ENCODE measurements at regions of chr6 and their contacts with region 1.

Region 1: GRCh38 chr6:111259089-111259831 is 172.0 kb downstream of the SLC16A10 start:
- DNase-seq: peak; percentile 97 to 100 (median 99)
- ATAC-seq: peak; percentile 92 to 93
- H3K4me3 Mint-ChIP-seq: peak overlapping the region; percentile 62 to 94 (median 86)
- H3K27ac Mint-ChIP-seq: peak overlapping the region; percentile 79 to 98 (median 95)
- H3K4me1 Mint-ChIP-seq: peaks cover 13 to 34% (median 32%) of the 10 kb centered on the region in 4 donors
- H3K27me3 Mint-ChIP-seq: peaks cover 0 to 2% (median 0%) of the 10 kb centered on the region in 5 donors

Region 2: DNA sequence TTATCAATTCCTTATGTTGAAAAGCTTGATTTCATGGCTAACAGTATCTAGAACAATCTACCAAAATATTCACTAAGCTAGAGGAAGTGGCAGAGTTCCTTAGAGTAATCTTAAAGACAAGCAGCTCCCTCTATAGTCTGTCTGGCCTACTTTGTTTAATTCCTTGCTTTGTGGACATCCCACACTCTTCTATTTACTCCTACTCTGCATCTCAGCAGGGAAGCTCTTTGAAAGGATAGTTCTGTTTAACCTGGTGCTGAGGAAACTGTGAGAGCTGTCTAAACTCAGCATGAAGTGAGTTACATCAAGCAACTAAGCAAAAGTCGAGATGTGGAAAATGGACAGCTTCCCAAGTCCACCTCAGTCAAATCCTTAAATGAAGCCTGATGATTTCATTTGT is 219.5 kb after region 1 on chr6:
- POLR2A ChIA-PET with region 1: interaction called, 35 read pairs
- DNase-seq: peak in 4 of 10 donors; percentile 8 to 59 (median 44)
- ATAC-seq: peak; percentile 8 to 19
- H3K4me3 Mint-ChIP-seq: peak overlapping the region in 1 of 10 donors; percentile 1
- H3K27ac Mint-ChIP-seq: peak overlapping the region in 6 of 10 donors; percentile 4 to 83 (median 68)
- H3K4me1 Mint-ChIP-seq: peaks cover 25 to 50% (median 37%) of the 10 kb centered on the region in 4 donors
- H3K27me3 Mint-ChIP-seq: no peaks in the 10 kb centered on the region

Region 3: GRCh38 chr6:111483736-111484632 is 224.7 kb after region 1 on chr6:
- POLR2A ChIA-PET with region 1: interaction called, 35 read pairs
- DNase-seq: peak in 6 of 10 donors; percentile 63 to 91 (median 82)
- ATAC-seq: peak in 1 of 2 donors; percentile 26
- H3K4me3 Mint-ChIP-seq: peak overlapping the region; percentile 95 to 100 (median 97)
- H3K27ac Mint-ChIP-seq: peak overlapping the region; percentile 96 to 100 (median 99)
- H3K4me1 Mint-ChIP-seq: peaks cover 16 to 50% (median 39%) of the 10 kb centered on the region in 4 donors
- H3K27me3 Mint-ChIP-seq: no peaks in the 10 kb centered on the region

Measured in naive thymus-derived CD8-positive, alpha-beta T cell (primary cell).